T-cell (primary cell): ENCODE measurements at regions of chr9 and their contacts with region 1.

Region 1: DNA sequence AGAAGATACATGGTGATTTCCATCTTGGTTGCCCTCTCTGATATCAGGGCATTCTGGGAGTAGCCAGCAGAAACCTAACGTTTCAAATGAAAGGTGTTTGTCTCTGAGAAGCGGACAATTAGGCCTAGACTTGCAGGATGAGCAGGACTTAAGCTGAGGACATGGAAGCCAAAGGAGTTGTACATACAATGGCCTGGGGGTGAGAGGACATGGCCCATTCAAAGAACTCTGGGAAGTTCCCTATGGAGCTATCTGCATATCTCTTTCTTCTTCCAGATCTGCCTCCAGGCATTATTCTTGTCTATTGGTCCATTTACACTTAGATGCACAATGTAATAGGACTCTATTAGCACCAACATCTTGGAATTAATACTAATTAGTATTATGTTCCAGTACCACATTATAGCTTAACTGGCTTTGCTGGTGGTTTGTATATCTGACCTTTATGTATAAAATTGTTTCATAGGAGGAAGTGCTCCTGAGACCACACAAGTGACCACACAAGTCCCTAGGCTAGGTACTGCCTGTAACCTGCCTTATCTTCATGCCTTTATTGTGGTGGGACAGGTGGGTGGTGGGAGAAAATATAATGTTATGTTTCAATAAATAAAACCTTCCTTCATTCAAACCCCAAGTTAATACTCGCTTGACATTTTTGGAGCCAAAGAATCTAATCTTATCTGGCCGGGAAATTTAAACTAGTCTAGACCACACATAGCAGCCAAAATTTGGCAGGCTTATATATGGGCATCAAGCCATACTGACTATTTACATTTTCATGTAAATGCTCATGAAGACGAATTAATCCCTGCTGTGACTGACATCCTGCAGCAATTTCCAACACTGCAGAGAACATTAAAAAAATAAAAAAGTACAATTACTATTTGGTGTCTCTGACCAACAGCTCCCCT is 52.1 kb upstream of the EQTN start:
- DNase-seq: no peak
- ATAC-seq: no peak
- H3K4me3 ChIP-seq: no peak overlapping the region
- H3K4me3 Mint-ChIP-seq: no peak overlapping the region
- H3K27ac ChIP-seq: no peak overlapping the region
- H3K27ac Mint-ChIP-seq: no peak overlapping the region
- H3K4me1 ChIP-seq: no peaks in the 10 kb centered on the region
- H3K4me1 Mint-ChIP-seq: peaks cover 9 to 11% (median 10%) of the 10 kb centered on the region in 3 donors
- H3K27me3 ChIP-seq: no peaks in the 10 kb centered on the region
- H3K27me3 Mint-ChIP-seq: no peaks in the 10 kb centered on the region

Region 2: GRCh38 chr9:27273186-27273585 is 75.9 kb before region 1 on chr9:
- CTCF ChIA-PET with region 1: no interaction called
- POLR2A ChIA-PET with region 1: interaction called in 1 of 2 experiments, 10 read pairs
- DNase-seq: no peak
- ATAC-seq: no peak
- H3K4me3 ChIP-seq: no peak overlapping the region
- H3K4me3 Mint-ChIP-seq: no peak overlapping the region
- H3K27ac ChIP-seq: no peak overlapping the region
- H3K27ac Mint-ChIP-seq: no peak overlapping the region
- H3K4me1 ChIP-seq: no peaks in the 10 kb centered on the region
- H3K4me1 Mint-ChIP-seq: no peaks in the 10 kb centered on the region
- H3K27me3 ChIP-seq: peaks cover 0 to 4% of the 10 kb centered on the region in 2 experiments
- H3K27me3 Mint-ChIP-seq: peaks cover 0 to 3% of the 10 kb centered on the region in 2 donors